ENCODE measurements at regions of chr11 and their contacts with region 1.

Region 1: DNA sequence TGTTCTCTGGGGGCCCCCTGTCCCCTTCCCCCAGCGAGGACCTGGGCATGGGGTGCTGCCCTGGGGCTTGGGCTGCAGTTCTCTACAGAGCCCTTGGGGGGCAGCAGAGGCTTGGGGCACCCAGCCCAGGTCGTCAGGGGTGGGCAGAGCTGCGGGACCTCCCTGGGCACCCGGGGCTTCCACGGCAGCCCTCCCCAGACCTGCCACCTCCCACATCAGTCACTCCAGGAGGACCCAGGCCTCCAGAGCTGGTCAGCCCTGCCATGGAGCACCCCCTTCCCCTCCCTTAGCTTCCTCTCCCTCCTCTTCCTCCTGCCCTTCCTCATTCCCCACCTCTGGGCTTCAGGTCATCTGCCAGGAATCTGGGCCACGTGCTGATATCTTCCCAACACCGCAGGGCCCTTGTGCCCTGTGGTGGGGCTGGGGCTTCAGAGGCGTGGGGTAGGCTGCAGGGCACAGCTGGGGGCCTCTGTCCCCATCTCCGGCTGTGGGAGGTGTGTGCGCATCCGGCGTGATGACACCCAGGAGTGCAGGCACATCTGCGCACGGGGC is 5.8 kb downstream of the TSPAN4 start:
- DNase-seq: no peak
- H3K4me3 ChIP-seq: no peak overlapping the region
- CTCF ChIP-seq: peak; percentile 94

Region 2: DNA sequence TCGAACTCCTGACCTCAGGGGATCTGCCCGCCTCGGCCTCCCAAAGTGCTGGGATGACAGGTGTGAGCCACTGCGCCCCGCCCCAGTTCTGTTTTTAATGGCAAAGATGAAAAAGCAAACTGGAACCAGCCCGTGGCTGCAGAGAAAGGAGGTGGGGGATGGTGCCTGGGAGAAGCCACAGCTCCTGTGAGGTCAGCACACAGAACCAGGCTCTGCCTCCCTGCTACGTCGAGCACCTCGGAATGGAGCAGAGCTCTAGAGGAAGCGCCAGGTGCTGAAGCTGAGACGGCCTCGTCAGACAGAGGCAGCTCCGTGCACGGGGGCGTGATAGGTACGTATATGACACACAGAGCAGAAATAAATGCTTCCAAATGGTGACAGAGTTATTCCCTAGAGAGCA is 202.9 kb before region 1 on chr11:
- CTCF ChIA-PET with region 1: no interaction called
- POLR2A ChIA-PET with region 1: no interaction called
- DNase-seq: no peak
- H3K4me3 ChIP-seq: no peak overlapping the region
- CTCF ChIP-seq: no peak

Region 3: DNA sequence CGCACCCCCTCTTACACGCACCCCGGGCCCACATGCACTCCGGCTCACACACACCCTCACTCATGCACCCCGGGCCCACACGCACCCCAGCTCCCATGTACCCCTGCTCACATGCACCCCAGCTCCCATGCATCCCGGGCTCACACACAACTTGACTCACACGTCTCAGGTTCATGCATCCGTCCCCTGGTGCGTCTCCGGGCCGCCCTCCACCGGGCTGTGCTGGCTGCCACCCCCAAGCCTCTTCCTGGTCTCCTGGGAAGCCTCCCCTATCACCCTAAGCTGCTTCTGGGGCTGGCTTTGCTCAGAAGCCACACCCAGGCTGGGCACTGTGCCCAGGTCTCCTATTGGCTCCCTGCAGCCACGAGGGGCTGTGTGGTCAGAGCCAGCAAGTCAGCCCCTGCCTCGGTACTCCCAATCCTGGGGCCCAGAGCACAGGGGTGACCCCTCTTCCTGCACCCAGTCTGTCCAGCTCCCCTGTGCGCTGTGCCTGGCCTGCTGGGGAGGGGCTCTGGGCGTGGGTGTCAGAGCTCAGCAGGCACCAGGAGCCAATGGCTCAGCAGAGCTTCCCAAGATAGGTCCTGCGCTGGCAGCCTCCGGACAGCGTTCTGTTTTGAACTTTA is 11.2 kb after region 1 on chr11:
- CTCF ChIA-PET with region 1: interaction called, 58 read pairs
- POLR2A ChIA-PET with region 1: no interaction called
- DNase-seq: no peak
- H3K4me3 ChIP-seq: no peak overlapping the region
- CTCF ChIP-seq: no peak

Region 4: GRCh38 chr11:1050581-1051355 is 202.3 kb after region 1 on chr11:
- CTCF ChIA-PET with region 1: interaction called, 10 read pairs
- POLR2A ChIA-PET with region 1: no interaction called
- DNase-seq: no peak
- H3K4me3 ChIP-seq: no peak overlapping the region
- CTCF ChIP-seq: peak; percentile 83